Endothelial cell of umbilical vein (primary cell): ENCODE measurements at regions of chr17 and their contacts with region 1.

Region 1: GRCh38 chr17:48997083-48997826 is at the start of gene IGF2BP1:
- DNase-seq: peak; percentile 80
- H3K4me3 ChIP-seq: peak within 1 kb of the TSS; percentile 80 to 85 (median 82)
- H3K27ac ChIP-seq: peak within 1 kb of the TSS; percentile 80
- H3K4me1 ChIP-seq: peaks cover 32% of the 10 kb centered on the region
- H3K27me3 ChIP-seq: peaks cover 20 to 34% of the 10 kb centered on the region in 2 experiments
- CTCF ChIP-seq: no peak
- POLR2A ChIP-seq: no peak
- total RNA-seq, gene IGF2BP1: 91.7 and 99.5 TPM in 2 replicates

Region 2: GRCh38 chr17:48944519-48945260 is 52.6 kb before region 1 on chr17 and contains the start of gene SNF8:
- CTCF ChIA-PET with region 1: interaction called, 3 read pairs
- POLR2A ChIA-PET with region 1: interaction called, 5 read pairs
- dilution Hi-C with region 1: no loop called
- intact Hi-C with region 1: loop called (anchors 1 kb)
- DNase-seq: peak; percentile 90
- H3K4me3 ChIP-seq: peak within 1 kb of the TSS; percentile 67 to 94 (median 73)
- H3K27ac ChIP-seq: peak within 1 kb of the TSS; percentile 70
- H3K4me1 ChIP-seq: peaks cover 15% of the 10 kb centered on the region
- H3K27me3 ChIP-seq: no peaks in the 10 kb centered on the region
- CTCF ChIP-seq: no peak
- POLR2A ChIP-seq: peak; percentile 90
- total RNA-seq, gene SNF8: 166 and 173 TPM in 2 replicates

Region 3: GRCh38 chr17:48954300-48954755 is 42.9 kb before region 1 on chr17:
- CTCF ChIA-PET with region 1: interaction called, 16 read pairs
- POLR2A ChIA-PET with region 1: no interaction called
- dilution Hi-C with region 1: no loop called
- intact Hi-C with region 1: no loop called
- DNase-seq: peak; percentile 69
- H3K4me3 ChIP-seq: no peak overlapping the region
- H3K27ac ChIP-seq: no peak overlapping the region
- H3K4me1 ChIP-seq: no peaks in the 10 kb centered on the region
- H3K27me3 ChIP-seq: peaks cover 0 to 2% of the 10 kb centered on the region in 2 experiments
- CTCF ChIP-seq: peak; percentile 66 to 69
- POLR2A ChIP-seq: no peak

Region 4: GRCh38 chr17:48970224-48970623 is 27.0 kb before region 1 on chr17:
- CTCF ChIA-PET with region 1: no interaction called
- POLR2A ChIA-PET with region 1: no interaction called
- dilution Hi-C with region 1: no loop called
- intact Hi-C with region 1: loop called (anchors 2 kb)
- DNase-seq: peak; percentile 29
- H3K4me3 ChIP-seq: no peak overlapping the region
- H3K27ac ChIP-seq: no peak overlapping the region
- H3K4me1 ChIP-seq: peaks cover 15% of the 10 kb centered on the region
- H3K27me3 ChIP-seq: no peaks in the 10 kb centered on the region
- CTCF ChIP-seq: no peak
- POLR2A ChIP-seq: no peak

Region 5: GRCh38 chr17:49016788-49017463 is 19.7 kb after region 1 on chr17:
- CTCF ChIA-PET with region 1: interaction called, 15 read pairs
- POLR2A ChIA-PET with region 1: interaction called, 5 read pairs
- dilution Hi-C with region 1: no loop called
- intact Hi-C with region 1: loop called (anchors 2 kb)
- DNase-seq: peak; percentile 94
- H3K4me3 ChIP-seq: no peak overlapping the region
- H3K27ac ChIP-seq: peak overlapping the region; percentile 45
- H3K4me1 ChIP-seq: peaks cover 52% of the 10 kb centered on the region
- H3K27me3 ChIP-seq: no peaks in the 10 kb centered on the region
- CTCF ChIP-seq: no peak
- POLR2A ChIP-seq: no peak